Colonic mucosa (tissue), 4 donors: ENCODE measurements at regions of chr10 and their contacts with region 1.

Region 1: DNA sequence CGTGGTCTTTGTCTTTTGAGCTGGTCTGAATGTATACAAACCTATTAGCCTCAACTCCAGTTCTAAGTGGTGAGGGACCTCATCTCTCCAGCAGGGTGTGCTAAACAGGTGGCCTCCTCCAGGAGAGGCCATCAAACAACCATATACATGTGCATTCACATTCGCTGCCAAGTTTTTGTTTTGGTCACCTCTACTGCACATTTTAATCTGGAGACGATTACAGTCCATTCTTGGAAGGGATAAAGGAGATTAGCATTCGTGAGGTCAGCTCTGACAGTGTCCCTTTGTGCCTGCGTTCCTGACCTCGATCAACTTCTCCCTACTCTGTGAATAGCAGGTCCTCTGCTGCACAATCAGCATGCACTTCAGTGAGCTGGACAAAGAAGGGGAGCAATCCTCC is 60.8 kb downstream of the RHOBTB1 start:
- DNase-seq: peak; percentile 26
- H3K4me3 ChIP-seq: no peak overlapping the region
- H3K27ac ChIP-seq: no peak overlapping the region
- H3K4me1 ChIP-seq: no peaks in the 10 kb centered on the region
- H3K27me3 ChIP-seq: no peaks in the 10 kb centered on the region
- CTCF ChIP-seq: peak; percentile 57

Region 2: DNA sequence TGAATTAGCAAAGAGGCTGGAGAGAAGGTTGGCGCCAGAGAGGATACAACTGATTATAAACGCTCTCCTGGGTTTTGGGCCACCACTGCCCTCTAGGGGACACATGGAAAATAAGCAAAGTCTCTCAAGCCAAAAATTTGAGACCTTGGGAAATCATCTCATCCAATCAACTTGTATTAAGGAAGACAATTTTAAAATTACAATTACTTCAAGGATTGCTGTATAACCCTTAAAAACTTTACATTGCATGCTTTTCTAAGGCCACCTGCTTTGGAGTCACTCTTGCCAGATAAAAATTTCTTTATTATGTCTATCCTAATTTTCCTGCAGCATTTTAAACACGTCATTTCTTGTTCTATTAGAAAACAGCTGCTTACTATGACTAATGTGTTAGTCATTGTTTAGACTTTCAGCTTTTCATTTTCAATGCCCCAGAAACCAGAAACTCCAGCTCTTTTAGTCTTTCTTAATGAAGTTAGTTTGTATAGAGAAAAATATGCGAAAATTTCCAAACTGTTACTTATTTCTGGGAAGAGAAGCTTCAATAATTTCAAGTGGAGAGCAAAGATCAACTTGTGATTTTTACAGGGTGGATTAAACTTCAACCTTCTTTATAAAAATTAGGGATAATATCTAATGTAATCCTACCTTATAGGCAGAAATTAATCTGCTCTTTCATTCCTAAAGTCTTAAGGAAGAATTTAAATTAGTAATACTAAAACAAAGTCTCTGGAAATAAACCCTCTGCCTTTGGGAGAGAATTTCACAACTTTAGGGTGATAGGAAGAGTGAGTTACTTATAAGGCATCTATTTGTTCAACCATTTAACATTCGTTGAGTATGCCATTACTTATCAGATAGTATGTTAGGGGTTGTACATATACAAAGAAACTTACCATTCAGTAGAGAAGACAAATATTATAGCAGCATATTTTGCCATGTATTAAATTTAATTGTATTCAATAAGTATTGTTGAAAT is 81.4 kb after region 1 on chr10:
- intact Hi-C with region 1: loop called (anchors 2 kb)
- DNase-seq: peak; percentile 75
- H3K4me3 ChIP-seq: no peak overlapping the region
- H3K27ac ChIP-seq: peak overlapping the region; percentile 10
- H3K4me1 ChIP-seq: no peaks in the 10 kb centered on the region
- H3K27me3 ChIP-seq: no peaks in the 10 kb centered on the region
- CTCF ChIP-seq: peak; percentile 78

Region 3: DNA sequence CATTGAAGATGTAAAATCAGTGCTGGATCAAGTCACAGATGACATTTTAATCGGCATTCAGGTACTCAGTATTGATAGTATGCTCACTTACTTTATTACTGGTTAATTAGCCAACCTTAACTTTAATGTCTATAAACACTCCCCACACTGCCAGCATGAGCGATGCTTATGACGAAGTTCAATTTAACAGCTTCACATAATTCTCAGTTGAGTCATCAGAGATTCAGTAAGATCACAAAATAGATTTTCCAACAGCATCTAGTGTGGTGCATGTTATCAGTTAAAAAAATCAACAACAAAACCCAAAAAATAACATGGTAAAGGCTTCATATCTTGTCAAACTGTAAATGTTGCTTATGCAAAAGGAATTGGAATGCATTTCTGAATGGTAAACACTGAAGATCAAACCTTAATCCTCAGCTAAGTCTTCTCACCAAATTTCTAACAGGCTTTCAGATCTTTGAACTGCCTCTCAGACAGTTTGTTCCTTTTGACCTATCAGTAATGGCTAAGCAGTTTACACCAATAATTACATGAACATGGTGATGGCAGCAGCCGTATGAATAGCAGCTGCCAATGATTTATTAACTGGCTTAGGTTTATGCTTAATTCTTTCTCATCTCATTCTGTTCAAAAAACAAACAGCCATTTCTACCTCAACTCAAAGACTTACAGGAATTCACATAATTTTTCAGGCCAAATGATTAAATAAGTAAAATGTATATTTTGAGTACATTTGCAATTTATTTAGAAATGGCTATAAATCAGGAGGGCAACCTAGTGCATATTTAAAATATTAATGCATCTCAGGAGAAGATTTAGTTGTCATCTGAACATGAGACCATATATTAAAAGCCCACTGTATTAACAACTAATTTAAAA is 878.0 kb after region 1 on chr10:
- intact Hi-C with region 1: no loop called
- DNase-seq: no peak
- H3K4me3 ChIP-seq: no peak overlapping the region
- H3K27ac ChIP-seq: peak overlapping the region; percentile 60
- H3K4me1 ChIP-seq: no peaks in the 10 kb centered on the region
- H3K27me3 ChIP-seq: no peaks in the 10 kb centered on the region
- CTCF ChIP-seq: no peak